Right ventricle myocardium inferior (tissue), 1 donor: ENCODE measurements at regions of chr11 and their contacts with region 1.

Region 1: DNA sequence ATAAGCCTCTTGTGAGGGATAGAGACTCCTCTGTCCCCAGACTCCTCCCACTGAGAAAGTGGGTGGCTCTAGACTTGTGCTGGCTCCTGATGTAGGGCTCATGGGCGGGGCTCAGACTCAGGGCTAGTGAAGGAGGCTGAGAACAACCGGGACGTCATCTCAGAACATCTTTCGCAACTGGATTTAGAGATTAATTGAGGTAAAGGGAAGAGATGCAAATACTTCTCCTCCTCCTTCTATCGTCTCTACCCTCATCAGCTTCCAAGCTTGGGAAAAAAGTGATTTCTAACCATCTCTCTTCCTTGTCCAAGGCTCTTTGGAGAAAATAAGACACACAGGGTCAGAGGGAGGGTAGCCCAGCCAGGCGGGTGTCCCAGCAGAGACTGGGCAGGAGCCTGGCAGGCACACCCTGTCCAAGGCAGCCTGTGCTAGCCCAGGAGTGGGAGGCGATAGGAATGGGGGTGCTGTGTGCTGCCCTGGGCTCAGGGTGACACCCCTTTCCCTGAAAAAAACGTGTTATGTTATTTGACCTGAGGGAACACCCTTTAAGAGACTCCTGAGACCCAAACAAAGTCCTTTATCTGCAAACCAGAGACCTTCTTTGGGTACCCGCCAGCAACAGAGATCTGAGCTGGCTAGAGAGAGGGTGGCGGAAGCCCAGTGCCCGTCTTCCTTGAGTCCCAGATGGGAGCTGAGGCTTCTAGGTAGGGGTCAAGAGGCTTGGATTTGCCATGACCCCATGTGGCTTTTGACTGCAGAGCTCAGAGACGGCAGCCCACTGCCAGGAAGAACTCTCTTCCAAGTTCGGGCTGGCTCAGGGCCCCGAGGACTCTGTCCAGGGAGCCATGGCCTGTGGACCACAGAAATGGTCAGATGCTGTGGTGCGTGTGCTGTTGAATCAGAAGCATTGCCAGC is 160.9 kb downstream of the ADAMTS15 start:
- DNase-seq: peak; percentile 92
- ATAC-seq: peak; percentile 89

Region 2: GRCh38 chr11:130580372-130580771 is 29.0 kb before region 1 on chr11:
- intact Hi-C with region 1: loop called (anchors 1 kb)
- DNase-seq: no peak
- ATAC-seq: peak; percentile 40

Region 3: DNA sequence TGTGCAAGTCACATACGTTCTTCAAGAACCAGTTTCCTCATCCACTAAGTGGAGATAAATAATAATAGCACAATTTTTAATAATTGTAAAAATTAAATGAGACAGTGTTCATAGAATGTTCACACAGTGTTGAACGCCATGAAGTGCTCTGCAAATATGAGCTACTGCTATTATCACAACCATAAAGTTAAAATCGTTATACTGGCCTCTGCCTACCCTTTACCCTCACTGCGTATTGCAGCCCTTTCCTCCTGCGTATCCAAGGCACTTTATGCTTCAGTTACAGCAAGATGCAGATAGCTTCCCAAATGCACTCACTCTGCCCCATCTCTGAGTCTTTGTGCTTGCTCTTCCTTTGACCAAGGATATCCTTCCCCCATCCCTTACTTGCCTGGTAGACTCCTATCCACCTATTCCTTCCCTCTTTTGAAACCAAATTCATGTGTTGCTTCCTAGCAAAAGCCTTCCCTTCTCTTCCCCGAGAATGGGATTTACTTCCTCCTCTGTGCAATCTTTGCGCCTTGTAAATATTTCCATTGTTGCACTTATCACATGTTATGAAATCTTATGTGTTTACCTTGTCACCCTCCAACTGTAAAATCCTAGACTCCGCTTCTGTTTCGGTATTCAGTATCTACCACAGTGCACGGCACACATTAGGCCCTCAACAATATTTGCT is 35.9 kb after region 1 on chr11:
- intact Hi-C with region 1: loop called (anchors 5 kb)
- DNase-seq: no peak
- ATAC-seq: no peak